ENCODE measurements at regions of chr5 and their contacts with region 1.

Region 1: DNA sequence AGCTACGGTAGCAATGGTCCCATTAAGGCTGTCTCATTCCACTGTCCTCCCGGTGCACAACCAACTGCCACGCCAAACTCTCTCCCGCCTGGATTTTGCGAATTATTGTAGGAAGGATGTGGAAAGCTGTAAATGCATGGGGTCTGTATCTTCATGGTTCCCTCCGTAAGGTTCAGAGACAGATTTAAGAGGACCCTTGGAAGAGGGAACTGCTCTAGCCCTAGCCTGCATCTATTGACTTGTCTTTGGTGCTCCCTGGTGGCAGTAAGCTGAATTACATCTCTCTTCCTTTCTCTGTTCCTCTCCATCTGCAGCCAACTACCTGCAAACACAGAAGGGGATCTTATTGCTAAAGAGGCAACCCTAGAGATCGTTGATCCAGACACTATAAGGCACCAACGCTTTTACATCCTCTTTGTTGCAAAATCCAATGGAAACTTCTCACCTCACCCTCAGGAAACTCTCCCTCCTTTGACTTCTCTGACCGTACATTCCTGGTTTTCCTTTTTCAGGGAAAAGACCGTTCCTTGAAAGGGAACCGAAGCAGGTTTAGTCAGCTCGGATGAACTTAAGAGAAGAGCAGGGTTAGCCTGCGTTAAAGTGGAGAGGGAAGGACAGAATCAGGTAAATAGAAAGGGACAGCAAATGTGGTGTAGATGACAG is 11.9 kb downstream of the CAPSL start:
- DNase-seq: peak; percentile 65
- H3K4me3 Mint-ChIP-seq: peak overlapping the region; percentile 40
- H3K27ac Mint-ChIP-seq: no peak overlapping the region
- H3K4me1 Mint-ChIP-seq: peaks cover 41% of the 10 kb centered on the region
- H3K27me3 Mint-ChIP-seq: peaks cover 12% of the 10 kb centered on the region

Region 2: DNA sequence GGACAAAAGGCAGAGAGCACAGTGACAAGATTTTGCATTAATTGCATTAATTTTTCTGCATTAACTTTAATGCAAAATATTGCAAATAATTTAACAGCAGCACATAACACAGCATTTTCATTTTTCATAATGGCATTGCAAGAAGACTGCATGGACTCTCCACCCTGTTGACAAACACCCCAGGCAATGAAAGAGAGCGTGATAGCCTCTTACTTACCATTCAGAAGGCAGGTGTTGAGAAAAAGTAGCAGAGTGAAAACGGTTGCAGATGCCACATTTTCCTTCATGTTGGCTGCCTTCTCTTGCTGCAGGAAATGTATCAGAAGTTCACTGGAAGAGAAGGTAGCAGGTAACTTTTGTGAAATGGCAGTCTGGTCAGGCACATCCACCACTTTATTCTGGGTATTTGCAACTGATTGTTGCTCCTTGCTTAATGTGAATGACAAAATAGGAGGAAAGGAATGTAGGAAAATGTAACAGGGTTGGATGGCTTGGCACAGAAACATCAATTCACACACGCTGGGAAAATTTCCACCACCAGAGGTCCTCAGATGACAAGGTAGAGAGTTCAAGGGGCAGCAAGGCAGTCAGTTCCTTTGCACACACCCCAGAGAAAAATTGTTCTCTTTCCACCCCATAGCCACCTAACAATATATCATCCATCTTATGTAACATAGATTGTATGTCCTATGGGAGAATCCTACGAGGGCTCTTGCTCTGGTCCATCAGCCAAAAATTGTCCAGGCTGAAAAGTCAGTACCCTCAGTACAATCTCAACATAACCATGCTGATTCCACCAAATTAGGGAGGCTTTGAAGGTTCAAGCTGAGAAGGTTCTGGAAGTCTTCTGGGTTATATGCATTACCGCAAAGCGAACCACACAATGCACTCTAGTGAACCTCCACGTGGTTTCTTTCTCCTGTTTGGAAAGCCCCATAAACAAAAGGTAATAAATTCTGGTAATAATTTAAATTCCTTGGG is 836.9 kb before region 1 on chr5:
- CTCF ChIA-PET with region 1: interaction called, 8 read pairs
- POLR2A ChIA-PET with region 1: no interaction called
- intact Hi-C with region 1: loop called (anchors 1 kb)
- DNase-seq: peak; percentile 64
- H3K4me3 Mint-ChIP-seq: no peak overlapping the region
- H3K27ac Mint-ChIP-seq: no peak overlapping the region
- H3K4me1 Mint-ChIP-seq: no peaks in the 10 kb centered on the region
- H3K27me3 Mint-ChIP-seq: peaks cover 3% of the 10 kb centered on the region

Region 3: DNA sequence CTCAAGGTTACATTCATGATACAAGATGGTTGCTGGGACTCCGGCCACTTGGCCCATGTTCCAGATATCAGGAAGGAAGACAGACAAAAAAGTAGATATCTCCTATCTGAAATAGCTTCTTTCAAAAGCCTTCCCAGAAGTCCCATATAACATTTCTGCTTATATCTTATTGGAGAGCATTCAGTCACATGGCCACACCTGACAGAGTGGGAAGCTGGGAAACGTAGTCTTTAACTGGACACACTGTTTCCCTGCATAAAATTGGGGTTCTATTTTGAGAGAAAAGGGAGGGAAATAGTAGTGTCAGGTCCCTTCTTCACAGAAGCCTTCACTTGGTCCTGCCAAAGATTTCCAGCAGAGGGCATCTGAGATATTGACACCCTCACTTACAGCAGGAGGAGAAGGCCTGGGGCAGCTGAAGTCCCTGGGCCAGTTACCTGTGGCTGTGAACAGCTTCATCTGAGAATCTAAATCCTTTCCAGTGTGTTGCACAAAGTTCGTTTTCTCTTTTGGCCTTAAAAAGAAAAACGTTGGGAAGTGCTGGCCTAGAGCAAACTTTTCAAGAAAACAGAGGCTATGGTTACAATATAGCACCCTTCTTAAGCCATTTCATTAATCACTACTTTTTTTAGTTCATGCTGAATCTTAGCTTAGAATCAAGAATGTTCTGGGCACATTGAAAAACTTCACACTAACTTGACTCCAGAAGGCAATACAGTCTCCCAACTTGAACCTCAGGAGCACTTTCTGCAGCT is 275.3 kb before region 1 on chr5:
- CTCF ChIA-PET with region 1: interaction called, 216 read pairs
- POLR2A ChIA-PET with region 1: interaction called, 8 read pairs
- intact Hi-C with region 1: loop called (anchors 1 kb)
- DNase-seq: peak; percentile 74
- H3K4me3 Mint-ChIP-seq: no peak overlapping the region
- H3K27ac Mint-ChIP-seq: no peak overlapping the region
- H3K4me1 Mint-ChIP-seq: peaks cover 10% of the 10 kb centered on the region
- H3K27me3 Mint-ChIP-seq: no peaks in the 10 kb centered on the region

Region 4: DNA sequence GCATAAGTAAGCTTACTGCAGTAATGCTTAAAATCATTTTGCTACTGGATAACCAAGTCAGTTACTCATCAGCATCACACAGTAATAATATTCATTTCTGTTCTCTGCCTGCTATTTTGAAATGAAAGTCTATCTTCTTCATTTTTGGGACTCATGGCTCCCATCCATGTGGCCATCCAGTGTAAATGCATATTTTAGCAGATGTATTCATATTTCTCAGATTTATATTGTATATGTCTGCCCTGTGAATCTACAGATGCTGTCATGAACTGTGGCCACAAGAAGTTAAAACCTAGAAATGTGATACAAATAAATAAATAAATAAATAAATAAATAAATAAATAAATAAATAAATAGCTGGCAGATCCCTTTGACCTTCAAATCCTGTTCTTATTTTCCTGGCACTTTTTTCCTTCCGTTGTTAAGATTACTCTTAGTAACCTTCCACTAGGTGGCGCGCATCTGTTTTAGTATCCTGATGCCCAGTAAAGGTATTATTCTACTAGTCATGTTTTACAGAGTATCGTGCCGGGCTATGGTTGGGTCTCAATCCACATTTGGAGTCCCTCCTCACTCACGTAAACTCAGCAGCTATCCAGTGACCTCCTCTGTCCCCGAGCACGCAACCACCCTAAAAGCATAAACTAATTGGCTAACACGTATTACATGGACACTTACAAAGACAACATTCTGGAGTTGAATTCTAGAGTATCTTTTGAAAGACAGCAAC is 149.0 kb before region 1 on chr5:
- CTCF ChIA-PET with region 1: interaction called, 132 read pairs
- POLR2A ChIA-PET with region 1: interaction called, 4 read pairs
- intact Hi-C with region 1: loop called (anchors 1 kb)
- DNase-seq: peak; percentile 73
- H3K4me3 Mint-ChIP-seq: peak overlapping the region; percentile 59
- H3K27ac Mint-ChIP-seq: peak overlapping the region; percentile 89
- H3K4me1 Mint-ChIP-seq: peaks cover 79% of the 10 kb centered on the region
- H3K27me3 Mint-ChIP-seq: no peaks in the 10 kb centered on the region

Region 5: DNA sequence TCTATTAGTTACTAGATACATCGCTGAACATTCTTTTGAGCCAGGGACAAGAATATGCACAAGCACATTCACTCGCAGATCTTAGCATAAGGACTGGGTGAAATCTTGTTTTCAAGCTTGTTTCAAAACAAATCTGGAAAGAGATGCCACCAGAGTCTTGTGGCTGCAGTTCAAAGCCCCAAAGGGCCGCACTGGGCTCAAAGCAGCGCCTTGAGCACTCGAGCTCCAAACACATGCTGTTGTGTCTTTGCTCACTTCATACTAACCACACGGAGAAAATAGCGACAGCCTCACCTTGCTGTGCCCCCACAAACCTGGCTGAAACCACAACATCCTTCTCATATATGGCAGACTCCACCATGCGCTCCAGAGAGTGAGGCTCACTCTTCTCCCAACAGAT is 104.0 kb before region 1 on chr5:
- CTCF ChIA-PET with region 1: interaction called, 32 read pairs
- POLR2A ChIA-PET with region 1: no interaction called
- intact Hi-C with region 1: no loop called
- DNase-seq: peak; percentile 64
- H3K4me3 Mint-ChIP-seq: peak overlapping the region; percentile 40
- H3K27ac Mint-ChIP-seq: peak overlapping the region; percentile 94
- H3K4me1 Mint-ChIP-seq: peaks cover 87% of the 10 kb centered on the region
- H3K27me3 Mint-ChIP-seq: no peaks in the 10 kb centered on the region

Region 6: GRCh38 chr5:35863159-35863558 is 63.4 kb before region 1 on chr5:
- CTCF ChIA-PET with region 1: interaction called, 37 read pairs
- POLR2A ChIA-PET with region 1: interaction called, 14 read pairs
- intact Hi-C with region 1: no loop called
- DNase-seq: peak; percentile 59
- H3K4me3 Mint-ChIP-seq: peak overlapping the region; percentile 78
- H3K27ac Mint-ChIP-seq: peak overlapping the region; percentile 95
- H3K4me1 Mint-ChIP-seq: peaks cover 78% of the 10 kb centered on the region
- H3K27me3 Mint-ChIP-seq: no peaks in the 10 kb centered on the region

Region 7: DNA sequence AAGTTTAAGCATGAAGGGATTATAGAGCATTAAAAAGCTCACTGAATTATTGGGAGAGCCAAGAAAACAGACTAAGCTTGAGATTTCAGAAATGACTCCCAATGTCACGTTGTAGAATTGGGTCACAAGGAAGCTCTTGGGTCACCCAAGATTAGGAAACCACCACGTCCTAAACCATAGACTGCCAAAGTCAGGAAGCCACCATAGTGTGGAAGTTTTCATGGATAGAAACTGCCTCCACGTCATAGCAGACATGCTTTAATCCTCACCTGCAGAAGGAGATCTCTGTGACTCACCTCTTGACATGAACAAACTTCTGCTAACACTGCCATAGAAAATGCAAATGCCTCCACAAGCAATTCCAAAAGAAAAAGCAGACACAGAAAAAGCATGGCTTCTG is 786.2 kb after region 1 on chr5:
- CTCF ChIA-PET with region 1: no interaction called
- POLR2A ChIA-PET with region 1: no interaction called
- intact Hi-C with region 1: no loop called
- DNase-seq: no peak
- H3K4me3 Mint-ChIP-seq: no peak overlapping the region
- H3K27ac Mint-ChIP-seq: no peak overlapping the region
- H3K4me1 Mint-ChIP-seq: no peaks in the 10 kb centered on the region
- H3K27me3 Mint-ChIP-seq: no peaks in the 10 kb centered on the region

Region 8: DNA sequence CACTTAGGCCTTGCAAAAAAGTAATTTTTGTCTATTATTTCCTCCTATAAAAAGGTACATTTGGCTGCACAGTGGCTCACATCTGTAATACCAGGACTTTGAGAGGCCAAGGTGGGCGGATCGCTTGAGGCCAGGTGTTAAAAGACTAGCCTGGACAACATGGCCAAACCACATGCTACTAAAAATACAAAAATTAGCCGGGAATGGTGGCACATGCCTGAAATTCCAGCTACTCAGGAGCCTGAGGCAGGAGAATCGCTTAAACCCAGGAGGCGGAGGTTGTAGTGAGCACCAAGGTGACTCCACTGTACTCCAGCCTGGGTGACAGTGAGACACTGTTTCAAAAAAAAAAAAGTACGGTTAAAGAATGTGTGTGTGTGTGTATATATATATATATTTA is 1428.6 kb after region 1 on chr5:
- CTCF ChIA-PET with region 1: no interaction called
- POLR2A ChIA-PET with region 1: no interaction called
- intact Hi-C with region 1: no loop called
- DNase-seq: no peak
- H3K4me3 Mint-ChIP-seq: no peak overlapping the region
- H3K27ac Mint-ChIP-seq: no peak overlapping the region
- H3K4me1 Mint-ChIP-seq: no peaks in the 10 kb centered on the region
- H3K27me3 Mint-ChIP-seq: no peaks in the 10 kb centered on the region

Measured in activated CD4-positive, alpha-beta memory T cell treated with anti-CD3 and anti-CD28 coated beads for 36 hours (primary cell).